ENCODE measurements at regions of chr3 and their contacts with region 1.

Region 1: GRCh38 chr3:120558771-120559241 is 37.3 kb upstream of the NDUFB4 start:
- DNase-seq: peak; percentile 85 to 91 (median 89)
- H3K4me3 ChIP-seq: peak overlapping the region in 1 of 2 donors; percentile 33
- H3K4me3 Mint-ChIP-seq: peak overlapping the region; percentile 74 to 88 (median 82)
- H3K27ac ChIP-seq: peak overlapping the region; percentile 36
- H3K27ac Mint-ChIP-seq: peak overlapping the region; percentile 69 to 96 (median 93)
- H3K4me1 ChIP-seq: peaks cover 11% of the 10 kb centered on the region
- H3K4me1 Mint-ChIP-seq: peaks cover 11 to 24% (median 13%) of the 10 kb centered on the region in 4 donors
- H3K27me3 ChIP-seq: no peaks in the 10 kb centered on the region
- H3K27me3 Mint-ChIP-seq: peaks cover 1% of the 10 kb centered on the region in 2 donors

Region 2: GRCh38 chr3:118792191-118792590 is 1766.6 kb before region 1 on chr3:
- CTCF ChIA-PET with region 1: no interaction called
- POLR2A ChIA-PET with region 1: no interaction called
- intact Hi-C with region 1: no loop called
- DNase-seq: no peak
- H3K4me3 ChIP-seq: no peak overlapping the region
- H3K4me3 Mint-ChIP-seq: no peak overlapping the region
- H3K27ac ChIP-seq: no peak overlapping the region
- H3K27ac Mint-ChIP-seq: no peak overlapping the region
- H3K4me1 ChIP-seq: no peaks in the 10 kb centered on the region
- H3K4me1 Mint-ChIP-seq: no peaks in the 10 kb centered on the region
- H3K27me3 ChIP-seq: no peaks in the 10 kb centered on the region
- H3K27me3 Mint-ChIP-seq: peaks cover 3 to 4% of the 10 kb centered on the region in 2 donors

Region 3: GRCh38 chr3:119490153-119490552 is 1068.7 kb before region 1 on chr3:
- CTCF ChIA-PET with region 1: no interaction called
- POLR2A ChIA-PET with region 1: no interaction called
- intact Hi-C with region 1: no loop called
- DNase-seq: no peak
- H3K4me3 ChIP-seq: no peak overlapping the region
- H3K4me3 Mint-ChIP-seq: peak overlapping the region in 1 of 8 donors; percentile 43
- H3K27ac ChIP-seq: no peak overlapping the region
- H3K27ac Mint-ChIP-seq: peak overlapping the region in 4 of 7 donors; percentile 23 to 74 (median 50)
- H3K4me1 ChIP-seq: no peaks in the 10 kb centered on the region
- H3K4me1 Mint-ChIP-seq: peaks cover 2 to 8% (median 5%) of the 10 kb centered on the region in 4 donors
- H3K27me3 ChIP-seq: no peaks in the 10 kb centered on the region
- H3K27me3 Mint-ChIP-seq: no peaks in the 10 kb centered on the region

Region 4: GRCh38 chr3:119891944-119892721 is 666.7 kb before region 1 on chr3:
- CTCF ChIA-PET with region 1: interaction called, 17 read pairs
- POLR2A ChIA-PET with region 1: no interaction called
- intact Hi-C with region 1: loop called (anchors 1 kb)
- DNase-seq: peak in 4 of 5 donors; percentile 55 to 62 (median 58)
- H3K4me3 ChIP-seq: no peak overlapping the region
- H3K4me3 Mint-ChIP-seq: no peak overlapping the region
- H3K27ac ChIP-seq: no peak overlapping the region
- H3K27ac Mint-ChIP-seq: peak overlapping the region in 2 of 7 donors; percentile 5 to 32
- H3K4me1 ChIP-seq: no peaks in the 10 kb centered on the region
- H3K4me1 Mint-ChIP-seq: peaks cover 11 to 17% (median 15%) of the 10 kb centered on the region in 4 donors
- H3K27me3 ChIP-seq: no peaks in the 10 kb centered on the region
- H3K27me3 Mint-ChIP-seq: no peaks in the 10 kb centered on the region

Region 5: DNA sequence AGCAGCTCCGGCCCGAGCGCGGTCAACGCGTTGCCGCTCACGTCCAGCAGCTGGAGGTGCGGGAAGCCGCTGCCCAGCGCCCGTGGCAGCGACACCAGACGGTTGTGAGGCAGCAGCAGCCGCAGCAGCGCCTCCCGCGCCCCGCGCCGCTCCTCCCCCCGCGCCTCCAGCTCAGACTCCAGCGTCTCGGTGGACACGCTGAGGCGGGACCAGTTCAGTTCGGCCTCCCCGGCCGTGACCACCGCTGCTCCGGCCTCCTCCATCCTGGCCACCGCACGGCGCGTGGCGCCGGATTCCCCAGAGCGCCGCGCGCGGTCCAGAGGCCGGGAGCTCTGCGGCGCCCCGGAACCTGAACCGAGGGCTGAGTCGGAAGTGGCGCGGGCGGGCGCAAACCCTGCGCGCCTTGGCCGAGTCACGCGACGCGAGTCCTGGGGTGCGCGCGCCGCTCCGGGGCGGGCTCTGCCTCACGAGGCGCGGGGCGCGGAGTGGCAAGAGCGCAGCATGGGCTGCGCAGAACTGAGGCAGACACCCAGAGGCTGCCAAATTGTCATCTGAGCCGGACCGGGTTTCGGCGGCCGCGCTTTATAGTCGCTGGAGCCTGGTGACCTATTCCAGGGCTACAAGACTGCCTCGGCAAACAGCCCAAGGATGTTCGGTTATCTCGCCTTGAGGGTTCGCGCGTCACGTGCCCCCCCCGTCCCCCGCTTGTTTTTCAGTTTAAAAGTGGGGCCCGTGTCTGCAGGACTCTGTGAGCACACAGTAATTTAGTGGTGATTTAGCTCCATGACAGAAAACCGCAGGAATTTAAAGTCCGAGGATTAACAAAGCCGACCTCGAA is 209.6 kb before region 1 on chr3 and contains the start of gene LRRC58:
- CTCF ChIA-PET with region 1: interaction called, 5 read pairs
- POLR2A ChIA-PET with region 1: interaction called, 3 read pairs
- intact Hi-C with region 1: loop called (anchors 10 kb)
- DNase-seq: peak; percentile 86 to 93 (median 93)
- H3K4me3 ChIP-seq: peak within 1 kb of the TSS; percentile 67 to 91
- H3K4me3 Mint-ChIP-seq: peak within 1 kb of the TSS; percentile 88 to 95 (median 93)
- H3K27ac ChIP-seq: peak within 1 kb of the TSS; percentile 77
- H3K27ac Mint-ChIP-seq: peak within 1 kb of the TSS; percentile 87 to 96 (median 92)
- H3K4me1 ChIP-seq: peaks cover 46% of the 10 kb centered on the region
- H3K4me1 Mint-ChIP-seq: peaks cover 36 to 50% (median 43%) of the 10 kb centered on the region in 4 donors
- H3K27me3 ChIP-seq: no peaks in the 10 kb centered on the region
- H3K27me3 Mint-ChIP-seq: peaks cover 2% of the 10 kb centered on the region in 2 donors
- total RNA-seq, gene LRRC58: 23.0 to 23.6 TPM

Region 6: DNA sequence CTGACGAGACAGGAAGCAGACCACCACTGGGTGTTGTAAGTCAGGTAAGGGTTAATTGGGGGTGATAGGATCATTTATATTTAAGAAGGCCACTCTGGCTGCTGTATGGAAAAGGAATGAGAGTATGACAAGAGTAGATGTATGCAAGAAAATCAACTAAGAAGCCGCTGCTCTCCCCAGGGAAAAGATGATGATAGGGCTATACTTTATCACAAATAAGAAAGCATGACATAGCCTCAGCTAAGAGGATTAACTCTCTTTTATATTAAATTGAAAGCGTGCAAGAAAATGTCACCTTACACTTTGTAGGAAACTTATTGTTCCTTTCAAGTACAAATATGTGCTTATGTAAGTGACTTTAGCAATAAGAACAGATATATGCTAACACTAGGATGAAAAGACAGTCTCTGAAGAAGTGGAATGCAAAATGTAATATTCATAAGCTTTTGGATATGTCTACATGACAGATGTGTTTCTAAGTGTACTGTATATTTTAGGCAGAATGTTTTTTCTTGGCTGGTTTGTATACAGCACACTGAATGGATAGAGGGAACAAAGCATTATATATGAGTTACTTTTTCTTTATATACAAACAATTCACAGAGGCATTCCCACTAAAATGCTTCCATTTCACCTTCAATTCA is 28.6 kb after region 1 on chr3:
- CTCF ChIA-PET with region 1: interaction called, 10 read pairs
- POLR2A ChIA-PET with region 1: no interaction called
- intact Hi-C with region 1: no loop called
- DNase-seq: no peak
- H3K4me3 ChIP-seq: no peak overlapping the region
- H3K4me3 Mint-ChIP-seq: no peak overlapping the region
- H3K27ac ChIP-seq: no peak overlapping the region
- H3K27ac Mint-ChIP-seq: no peak overlapping the region
- H3K4me1 ChIP-seq: no peaks in the 10 kb centered on the region
- H3K4me1 Mint-ChIP-seq: no peaks in the 10 kb centered on the region
- H3K27me3 ChIP-seq: no peaks in the 10 kb centered on the region
- H3K27me3 Mint-ChIP-seq: peaks cover 3 to 11% of the 10 kb centered on the region in 2 donors

Region 7: GRCh38 chr3:120601554-120601953 is 42.7 kb after region 1 on chr3:
- CTCF ChIA-PET with region 1: interaction called, 26 read pairs
- POLR2A ChIA-PET with region 1: interaction called, 8 read pairs
- intact Hi-C with region 1: loop called (anchors 1 kb)
- DNase-seq: no peak
- H3K4me3 ChIP-seq: no peak overlapping the region
- H3K4me3 Mint-ChIP-seq: no peak overlapping the region
- H3K27ac ChIP-seq: no peak overlapping the region
- H3K27ac Mint-ChIP-seq: peak overlapping the region in 2 of 7 donors; percentile 3 to 37
- H3K4me1 ChIP-seq: peaks cover 30% of the 10 kb centered on the region
- H3K4me1 Mint-ChIP-seq: peaks cover 0 to 8% (median 2%) of the 10 kb centered on the region in 4 donors
- H3K27me3 ChIP-seq: no peaks in the 10 kb centered on the region
- H3K27me3 Mint-ChIP-seq: no peaks in the 10 kb centered on the region

Region 8: GRCh38 chr3:120742198-120742849 is 183.5 kb after region 1 on chr3 and contains the starts of genes GTF2E1 and RABL3:
- CTCF ChIA-PET with region 1: interaction called, 13 read pairs
- POLR2A ChIA-PET with region 1: interaction called, 10 read pairs
- intact Hi-C with region 1: loop called (anchors 1 kb)
- DNase-seq: peak; percentile 96 to 99 (median 97)
- H3K4me3 ChIP-seq: peak within 1 kb of the TSS; percentile 83 to 92
- H3K4me3 Mint-ChIP-seq: peak within 1 kb of the TSS; percentile 89 to 98 (median 96)
- H3K27ac ChIP-seq: peak within 1 kb of the TSS; percentile 98
- H3K27ac Mint-ChIP-seq: peak within 1 kb of the TSS; percentile 96 to 99 (median 98)
- H3K4me1 ChIP-seq: peaks cover 34% of the 10 kb centered on the region
- H3K4me1 Mint-ChIP-seq: peaks cover 21 to 58% (median 39%) of the 10 kb centered on the region in 4 donors
- H3K27me3 ChIP-seq: no peaks in the 10 kb centered on the region
- H3K27me3 Mint-ChIP-seq: no peaks in the 10 kb centered on the region
- total RNA-seq, gene GTF2E1: 30.0 to 30.2 TPM
- total RNA-seq, gene RABL3: 31.9 to 33.0 TPM

Region 9: GRCh38 chr3:120795017-120795648 is 236.3 kb after region 1 on chr3:
- CTCF ChIA-PET with region 1: interaction called, 294 read pairs
- POLR2A ChIA-PET with region 1: interaction called, 9 read pairs
- intact Hi-C with region 1: loop called (anchors 1 kb)
- DNase-seq: peak; percentile 75 to 80 (median 76)
- H3K4me3 ChIP-seq: no peak overlapping the region
- H3K4me3 Mint-ChIP-seq: no peak overlapping the region
- H3K27ac ChIP-seq: no peak overlapping the region
- H3K27ac Mint-ChIP-seq: no peak overlapping the region
- H3K4me1 ChIP-seq: no peaks in the 10 kb centered on the region
- H3K4me1 Mint-ChIP-seq: peaks cover 0 to 12% (median 4%) of the 10 kb centered on the region in 4 donors
- H3K27me3 ChIP-seq: no peaks in the 10 kb centered on the region
- H3K27me3 Mint-ChIP-seq: peaks cover 0 to 2% of the 10 kb centered on the region in 2 donors

Measured in CD4-positive, alpha-beta memory T cell (primary cell).